Natural killer cell (primary cell): ENCODE measurements at regions of chr11 and their contacts with region 1.

Region 1: DNA sequence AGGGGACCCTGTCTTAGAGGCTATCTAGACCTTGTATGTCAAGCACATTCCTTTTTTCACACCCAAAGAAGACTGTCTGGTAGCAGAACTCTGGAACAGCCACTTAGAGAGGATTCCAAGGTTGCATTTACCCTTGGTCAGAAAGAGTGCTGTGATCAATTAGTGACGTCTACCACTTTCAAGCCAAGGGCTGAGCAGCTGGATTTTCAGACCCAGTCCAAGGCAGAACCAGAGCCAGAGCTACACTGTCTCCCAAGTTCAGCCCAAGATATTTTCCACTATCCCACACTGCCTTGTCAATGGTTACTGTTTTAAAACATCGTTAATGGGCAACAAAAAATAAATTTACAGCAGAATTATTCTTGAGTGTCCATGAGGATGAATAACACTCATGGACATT is 24.0 kb downstream of the ABCC8 start:
- DNase-seq: no peak
- ATAC-seq: no peak
- H3K4me3 ChIP-seq: no peak overlapping the region
- H3K4me3 Mint-ChIP-seq: no peak overlapping the region
- H3K27ac ChIP-seq: no peak overlapping the region
- H3K27ac Mint-ChIP-seq: no peak overlapping the region
- H3K4me1 ChIP-seq: no peaks in the 10 kb centered on the region
- H3K4me1 Mint-ChIP-seq: no peaks in the 10 kb centered on the region
- H3K27me3 ChIP-seq: no peaks in the 10 kb centered on the region
- H3K27me3 Mint-ChIP-seq: peaks cover 8 to 18% of the 10 kb centered on the region in 2 donors
- CTCF ChIP-seq: no peak

Region 2: DNA sequence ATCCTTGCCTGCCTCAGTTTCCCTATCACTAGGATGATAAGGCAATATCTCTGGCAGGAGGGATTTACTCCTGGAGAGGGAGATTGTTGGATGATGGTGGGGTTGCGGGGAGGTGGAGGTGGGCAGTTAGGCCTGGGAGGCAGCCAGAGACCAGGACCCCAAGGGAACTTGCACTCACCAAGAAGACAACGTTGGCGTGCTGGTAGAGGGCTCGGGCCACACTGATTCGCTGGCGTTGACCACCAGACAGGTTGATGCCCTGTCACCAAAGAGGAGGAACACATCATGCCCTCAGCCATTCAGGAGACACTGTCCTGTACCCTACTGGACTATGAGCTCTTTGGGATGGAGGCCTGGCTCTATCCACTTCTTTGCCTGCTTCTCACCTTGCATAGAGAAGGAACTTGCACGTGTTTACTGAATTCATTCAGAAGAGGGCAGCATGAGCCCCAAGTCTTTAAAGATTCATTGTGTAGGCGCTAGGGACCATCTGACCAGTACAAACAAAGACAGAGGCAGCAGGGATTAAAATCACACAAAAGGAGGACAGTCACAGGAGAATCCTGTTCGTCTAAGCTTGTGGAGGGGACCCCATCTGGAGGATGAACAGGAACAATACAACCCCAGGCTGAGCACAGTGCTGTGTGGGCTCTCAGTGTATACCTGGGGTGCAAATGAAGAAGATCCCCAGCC is 40.0 kb before region 1 on chr11:
- intact Hi-C with region 1: loop called (anchors 1 kb)
- DNase-seq: no peak
- ATAC-seq: no peak
- H3K4me3 ChIP-seq: no peak overlapping the region
- H3K4me3 Mint-ChIP-seq: no peak overlapping the region
- H3K27ac ChIP-seq: no peak overlapping the region
- H3K27ac Mint-ChIP-seq: no peak overlapping the region
- H3K4me1 ChIP-seq: no peaks in the 10 kb centered on the region
- H3K4me1 Mint-ChIP-seq: no peaks in the 10 kb centered on the region
- H3K27me3 ChIP-seq: no peaks in the 10 kb centered on the region
- H3K27me3 Mint-ChIP-seq: peaks cover 0 to 11% of the 10 kb centered on the region in 2 donors
- CTCF ChIP-seq: no peak